CD4-positive, alpha-beta T cell (primary cell): ENCODE measurements at regions of chr1 and their contacts with region 1.

Region 1: DNA sequence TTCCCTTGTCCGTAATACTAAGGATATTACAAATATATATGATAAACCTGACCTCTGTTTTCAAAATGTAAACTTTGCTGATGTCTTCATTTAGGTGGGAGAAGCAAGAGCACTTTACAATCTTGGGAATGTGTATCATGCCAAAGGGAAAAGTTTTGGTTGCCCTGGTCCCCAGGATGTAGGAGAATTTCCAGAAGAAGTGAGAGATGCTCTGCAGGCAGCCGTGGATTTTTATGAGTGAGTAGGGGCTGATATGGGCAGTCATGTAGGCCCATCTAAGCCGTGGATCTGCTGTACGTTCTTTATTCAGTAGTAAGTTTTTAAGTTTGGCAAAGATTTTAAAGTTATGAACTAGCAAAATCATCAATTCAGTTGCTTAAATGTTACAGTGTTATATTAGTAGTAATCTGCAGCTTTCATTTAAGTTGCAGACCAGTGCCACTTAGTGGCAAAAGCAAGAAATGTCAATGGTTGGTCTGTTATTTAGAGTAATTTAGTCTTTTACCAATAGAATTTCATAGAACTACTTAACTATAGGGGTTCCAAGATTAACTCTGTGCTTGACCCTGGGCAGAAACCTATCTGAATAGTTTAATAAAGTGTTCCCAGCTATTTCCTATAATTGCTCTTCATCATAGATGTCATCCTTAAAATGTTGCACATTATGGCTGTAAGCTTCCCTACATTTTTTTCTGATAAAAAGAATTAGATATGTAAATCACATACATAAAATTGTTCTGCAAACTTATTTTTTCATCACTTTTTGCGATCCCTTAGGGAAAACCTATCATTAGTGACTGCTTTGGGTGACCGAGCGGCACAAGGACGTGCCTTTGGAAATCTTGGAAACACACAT is 21.3 kb downstream of the GPSM2 start:
- DNase-seq: peak in 6 of 14 experiments; percentile 11 to 72 (median 54)
- ATAC-seq: peak; percentile 86
- H3K4me3 ChIP-seq: no peak overlapping the region
- H3K4me3 Mint-ChIP-seq: no peak overlapping the region
- H3K27ac ChIP-seq: no peak overlapping the region
- H3K27ac Mint-ChIP-seq: no peak overlapping the region
- H3K4me1 ChIP-seq: no peaks in the 10 kb centered on the region
- H3K4me1 Mint-ChIP-seq: no peaks in the 10 kb centered on the region
- H3K27me3 ChIP-seq: no peaks in the 10 kb centered on the region
- H3K27me3 Mint-ChIP-seq: no peaks in the 10 kb centered on the region
- CTCF ChIP-seq: peak; percentile 78

Region 2: DNA sequence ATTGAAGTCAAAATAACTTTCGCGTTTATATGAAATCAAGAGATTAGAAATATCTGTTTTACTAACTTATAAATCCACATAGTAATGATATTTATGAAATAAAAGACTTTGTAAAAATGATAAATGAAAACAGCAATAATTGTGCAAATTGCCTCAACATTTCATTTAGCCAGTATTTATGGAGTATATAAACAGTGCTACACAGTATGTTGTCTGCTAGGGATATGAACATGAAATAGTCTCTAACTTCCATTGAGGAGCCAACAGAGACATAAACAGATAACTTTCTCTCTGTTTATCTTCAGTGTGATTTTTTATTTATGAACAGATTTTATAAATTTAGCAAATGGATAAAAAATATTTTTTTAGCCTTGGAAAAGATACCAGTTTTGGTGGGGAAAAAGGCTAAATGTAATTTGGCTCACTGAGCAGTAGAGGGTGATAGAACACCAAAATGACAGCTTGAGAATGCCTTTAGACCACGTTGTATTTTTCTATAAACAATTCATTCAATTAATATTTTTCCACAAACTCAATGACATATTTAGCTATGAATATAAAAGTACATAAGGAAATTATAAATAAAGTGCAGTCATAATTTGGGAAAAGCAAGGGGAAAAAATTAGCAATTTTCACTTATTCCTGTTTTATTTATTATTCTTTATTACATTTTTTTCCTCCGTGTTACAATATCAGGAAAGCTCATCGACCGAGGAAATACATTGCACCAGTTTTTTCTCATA is 385.7 kb before region 1 on chr1:
- CTCF ChIA-PET with region 1: no interaction called
- POLR2A ChIA-PET with region 1: interaction called, 3 read pairs
- intact Hi-C with region 1: loop called (anchors 1 to 5 kb)
- DNase-seq: peak in 4 of 14 experiments; percentile 6 to 75 (median 69)
- ATAC-seq: peak; percentile 77
- H3K4me3 ChIP-seq: no peak overlapping the region
- H3K4me3 Mint-ChIP-seq: no peak overlapping the region
- H3K27ac ChIP-seq: no peak overlapping the region
- H3K27ac Mint-ChIP-seq: no peak overlapping the region
- H3K4me1 ChIP-seq: no peaks in the 10 kb centered on the region
- H3K4me1 Mint-ChIP-seq: no peaks in the 10 kb centered on the region
- H3K27me3 ChIP-seq: peaks cover 0 to 10% of the 10 kb centered on the region in 2 experiments
- H3K27me3 Mint-ChIP-seq: peaks cover 13% of the 10 kb centered on the region
- CTCF ChIP-seq: peak; percentile 99

Region 3: GRCh38 chr1:108828022-108828961 is 69.8 kb before region 1 on chr1:
- CTCF ChIA-PET with region 1: interaction called, 56 read pairs
- POLR2A ChIA-PET with region 1: interaction called, 3 read pairs
- intact Hi-C with region 1: loop called (anchors 1 kb)
- DNase-seq: peak; percentile 46 to 83 (median 60)
- ATAC-seq: peak; percentile 68
- H3K4me3 ChIP-seq: no peak overlapping the region
- H3K4me3 Mint-ChIP-seq: no peak overlapping the region
- H3K27ac ChIP-seq: no peak overlapping the region
- H3K27ac Mint-ChIP-seq: no peak overlapping the region
- H3K4me1 ChIP-seq: peaks cover 4% of the 10 kb centered on the region
- H3K4me1 Mint-ChIP-seq: no peaks in the 10 kb centered on the region
- H3K27me3 ChIP-seq: no peaks in the 10 kb centered on the region
- H3K27me3 Mint-ChIP-seq: no peaks in the 10 kb centered on the region
- CTCF ChIP-seq: peak; percentile 78

Region 4: DNA sequence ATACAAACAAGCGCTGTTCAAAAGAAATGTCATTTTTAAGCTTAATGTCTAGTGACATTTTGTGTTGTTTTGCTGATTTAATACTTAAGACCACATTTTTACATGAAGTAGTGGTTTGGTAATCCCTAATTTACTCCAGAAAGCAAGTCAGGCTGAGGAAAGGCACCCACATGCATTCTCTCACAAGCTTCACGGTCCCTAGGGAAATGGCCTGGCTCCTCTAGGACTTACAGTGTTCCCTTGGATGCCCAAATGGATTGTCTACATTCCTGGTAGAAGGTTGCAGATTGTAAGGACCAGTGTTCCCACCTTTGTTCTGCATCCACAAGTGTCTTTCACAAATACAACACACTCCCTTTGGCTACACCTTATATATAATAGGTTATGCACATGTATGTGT is 11.8 kb before region 1 on chr1:
- CTCF ChIA-PET with region 1: interaction called, 13 read pairs
- POLR2A ChIA-PET with region 1: no interaction called
- intact Hi-C with region 1: no loop called
- DNase-seq: no peak
- ATAC-seq: no peak
- H3K4me3 ChIP-seq: no peak overlapping the region
- H3K4me3 Mint-ChIP-seq: no peak overlapping the region
- H3K27ac ChIP-seq: no peak overlapping the region
- H3K27ac Mint-ChIP-seq: no peak overlapping the region
- H3K4me1 ChIP-seq: no peaks in the 10 kb centered on the region
- H3K4me1 Mint-ChIP-seq: no peaks in the 10 kb centered on the region
- H3K27me3 ChIP-seq: no peaks in the 10 kb centered on the region
- H3K27me3 Mint-ChIP-seq: no peaks in the 10 kb centered on the region
- CTCF ChIP-seq: no peak

Region 5: GRCh38 chr1:109535971-109536491 is 637.9 kb after region 1 on chr1:
- CTCF ChIA-PET with region 1: no interaction called
- POLR2A ChIA-PET with region 1: no interaction called
- intact Hi-C with region 1: no loop called
- DNase-seq: no peak
- ATAC-seq: no peak
- H3K4me3 ChIP-seq: no peak overlapping the region
- H3K4me3 Mint-ChIP-seq: no peak overlapping the region
- H3K27ac ChIP-seq: no peak overlapping the region
- H3K27ac Mint-ChIP-seq: no peak overlapping the region
- H3K4me1 ChIP-seq: peaks cover 19% of the 10 kb centered on the region
- H3K4me1 Mint-ChIP-seq: peaks cover 23% of the 10 kb centered on the region
- H3K27me3 ChIP-seq: no peaks in the 10 kb centered on the region
- H3K27me3 Mint-ChIP-seq: no peaks in the 10 kb centered on the region
- CTCF ChIP-seq: no peak